Esophagus squamous epithelium (tissue), 5 donors: ENCODE measurements at regions of chr15 and their contacts with region 1.

Region 1: GRCh38 chr15:78108299-78109084 is 16.1 kb downstream of the SH2D7 start:
- DNase-seq: peak; percentile 33
- H3K4me3 ChIP-seq: no peak overlapping the region
- H3K27ac ChIP-seq: no peak overlapping the region
- H3K4me1 ChIP-seq: peaks cover 0 to 14% (median under 1%) of the 10 kb centered on the region in 3 donors
- H3K27me3 ChIP-seq: no peaks in the 10 kb centered on the region
- CTCF ChIP-seq: peak; percentile 92 to 96 (median 96)
- POLR2A ChIP-seq: no peak

Region 2: DNA sequence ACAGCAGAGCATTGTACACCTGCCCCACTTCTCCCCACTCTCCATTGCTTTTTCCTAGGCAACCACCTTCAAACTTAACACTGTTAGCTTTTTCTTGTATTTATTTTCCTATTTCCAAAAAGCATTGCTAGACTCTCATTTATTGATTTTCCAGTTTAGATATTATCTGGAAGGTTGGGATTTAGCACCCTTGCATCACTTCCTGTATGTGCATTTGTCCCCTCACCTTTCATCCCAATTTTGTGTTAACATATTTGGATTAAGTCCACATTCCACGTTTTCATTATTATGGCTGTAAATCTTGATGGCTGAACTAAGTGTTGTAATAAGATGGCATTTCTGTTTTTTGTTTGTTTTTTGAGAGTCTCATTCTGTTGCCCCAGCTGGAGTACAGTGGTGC is 140.7 kb before region 1 on chr15:
- intact Hi-C with region 1: loop called (anchors 2 kb)
- DNase-seq: no peak
- H3K4me3 ChIP-seq: no peak overlapping the region
- H3K27ac ChIP-seq: no peak overlapping the region
- H3K4me1 ChIP-seq: peaks cover 4 to 15% (median 5%) of the 10 kb centered on the region in 3 donors
- H3K27me3 ChIP-seq: no peaks in the 10 kb centered on the region
- CTCF ChIP-seq: no peak
- POLR2A ChIP-seq: no peak

Region 3: GRCh38 chr15:78195735-78196201 is 87.3 kb after region 1 on chr15:
- intact Hi-C with region 1: loop called (anchors 5 kb)
- DNase-seq: no peak
- H3K4me3 ChIP-seq: no peak overlapping the region
- H3K27ac ChIP-seq: no peak overlapping the region
- H3K4me1 ChIP-seq: no peaks in the 10 kb centered on the region
- H3K27me3 ChIP-seq: no peaks in the 10 kb centered on the region
- CTCF ChIP-seq: peak; percentile 62 to 87 (median 76)
- POLR2A ChIP-seq: no peak

Region 4: GRCh38 chr15:78241007-78241406 is 132.5 kb after region 1 on chr15:
- intact Hi-C with region 1: loop called (anchors 5 kb)
- DNase-seq: peak; percentile 16
- H3K4me3 ChIP-seq: no peak overlapping the region
- H3K27ac ChIP-seq: no peak overlapping the region
- H3K4me1 ChIP-seq: peaks cover 0 to 16% (median 3%) of the 10 kb centered on the region in 3 donors
- H3K27me3 ChIP-seq: peaks cover 0 to 9% (median 0%) of the 10 kb centered on the region in 4 donors
- CTCF ChIP-seq: peak; percentile 79 to 88 (median 85)
- POLR2A ChIP-seq: no peak